Panc1 (cell line): ENCODE measurements at regions of chr9 and their contacts with region 1.

Region 1: GRCh38 chr9:113269355-113269754 is 6.0 kb downstream of the CDC26 start:
- DNase-seq: no peak
- ATAC-seq: no peak
- H3K4me3 ChIP-seq: no peak overlapping the region
- H3K27ac ChIP-seq: no peak overlapping the region
- H3K4me1 ChIP-seq: no peaks in the 10 kb centered on the region
- H3K27me3 ChIP-seq: no peaks in the 10 kb centered on the region
- CTCF ChIP-seq: no peak

Region 2: GRCh38 chr9:113376634-113377567 is 107.5 kb after region 1 on chr9 and contains the start of gene HDHD3:
- CTCF ChIA-PET with region 1: interaction called, 15 read pairs
- POLR2A ChIA-PET with region 1: interaction called, 4 read pairs
- in situ Hi-C with region 1: no loop called
- intact Hi-C with region 1: no loop called
- DNase-seq: no peak
- ATAC-seq: peak; percentile 98
- H3K4me3 ChIP-seq: peak within 1 kb of the TSS; percentile 76 to 82
- H3K27ac ChIP-seq: peak within 1 kb of the TSS; percentile 75
- H3K4me1 ChIP-seq: no peaks in the 10 kb centered on the region; the same call in 1 of the 2 replicates
- H3K27me3 ChIP-seq: no peaks in the 10 kb centered on the region
- CTCF ChIP-seq: no peak
- total RNA-seq, gene HDHD3: 14.5 TPM